Right ventricle myocardium inferior (tissue), 1 donor: ENCODE measurements at regions of chr21 and their contacts with region 1.

Region 1: DNA sequence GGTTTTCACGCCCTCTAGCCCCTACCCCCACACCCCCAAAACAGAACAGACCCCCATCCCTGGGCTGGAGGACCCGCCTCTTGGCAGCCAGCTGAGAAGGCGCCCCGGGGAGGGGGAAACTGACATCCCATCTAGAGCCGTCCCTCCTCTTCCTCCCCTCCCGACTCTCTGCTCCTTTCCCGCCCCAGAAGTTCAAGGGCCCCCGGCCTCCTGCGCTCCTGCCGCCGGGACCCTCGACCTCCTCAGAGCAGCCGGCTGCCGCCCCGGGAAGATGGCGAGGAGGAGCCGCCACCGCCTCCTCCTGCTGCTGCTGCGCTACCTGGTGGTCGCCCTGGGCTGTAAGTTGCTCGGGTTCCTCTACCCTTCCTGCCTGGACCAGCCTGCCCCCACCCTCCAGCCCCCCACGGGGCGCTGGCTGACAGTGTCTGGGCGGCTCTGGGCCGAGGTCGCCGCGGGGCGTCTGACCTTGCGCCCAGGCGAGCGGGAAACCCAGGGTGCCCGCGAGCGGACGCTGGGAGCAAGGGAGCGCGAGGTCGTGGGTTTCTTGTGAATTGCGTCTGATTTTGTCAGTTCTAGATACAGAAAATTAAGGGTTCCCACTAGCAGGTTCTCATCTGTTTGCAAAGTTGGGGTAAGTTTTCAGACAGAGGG is 618 bp downstream of the JAM2 start:
- DNase-seq: peak; percentile 73
- ATAC-seq: peak; percentile 81

Region 2: GRCh38 chr21:25607151-25608043 is 32.3 kb before region 1 on chr21 and contains the start of gene MRPL39:
- intact Hi-C with region 1: loop called (anchors 2 kb)
- DNase-seq: peak; percentile 95
- ATAC-seq: peak; percentile 98
- total RNA-seq, gene MRPL39: 59.4 TPM

Region 3: DNA sequence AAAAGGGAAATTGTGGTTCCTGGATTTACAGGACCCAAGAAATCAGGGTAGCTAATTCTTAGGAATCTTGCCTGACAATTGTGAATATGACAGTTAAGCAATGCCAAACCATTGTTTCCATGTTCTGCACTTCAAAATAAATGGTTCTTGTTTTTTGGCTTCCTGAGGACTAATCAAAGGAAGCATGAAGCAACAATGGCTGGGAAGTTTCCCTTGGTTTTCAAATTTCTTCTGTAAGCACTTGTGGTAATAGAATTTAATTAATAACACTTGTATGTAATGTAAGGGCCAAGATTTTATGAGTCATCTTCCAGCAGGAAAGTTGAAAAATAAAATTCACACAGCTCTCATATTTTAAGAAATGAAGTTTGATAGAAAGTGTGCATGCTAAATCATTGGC is 31.1 kb after region 1 on chr21:
- intact Hi-C with region 1: loop called (anchors 1 kb)
- DNase-seq: no peak
- ATAC-seq: peak; percentile 68

Region 4: DNA sequence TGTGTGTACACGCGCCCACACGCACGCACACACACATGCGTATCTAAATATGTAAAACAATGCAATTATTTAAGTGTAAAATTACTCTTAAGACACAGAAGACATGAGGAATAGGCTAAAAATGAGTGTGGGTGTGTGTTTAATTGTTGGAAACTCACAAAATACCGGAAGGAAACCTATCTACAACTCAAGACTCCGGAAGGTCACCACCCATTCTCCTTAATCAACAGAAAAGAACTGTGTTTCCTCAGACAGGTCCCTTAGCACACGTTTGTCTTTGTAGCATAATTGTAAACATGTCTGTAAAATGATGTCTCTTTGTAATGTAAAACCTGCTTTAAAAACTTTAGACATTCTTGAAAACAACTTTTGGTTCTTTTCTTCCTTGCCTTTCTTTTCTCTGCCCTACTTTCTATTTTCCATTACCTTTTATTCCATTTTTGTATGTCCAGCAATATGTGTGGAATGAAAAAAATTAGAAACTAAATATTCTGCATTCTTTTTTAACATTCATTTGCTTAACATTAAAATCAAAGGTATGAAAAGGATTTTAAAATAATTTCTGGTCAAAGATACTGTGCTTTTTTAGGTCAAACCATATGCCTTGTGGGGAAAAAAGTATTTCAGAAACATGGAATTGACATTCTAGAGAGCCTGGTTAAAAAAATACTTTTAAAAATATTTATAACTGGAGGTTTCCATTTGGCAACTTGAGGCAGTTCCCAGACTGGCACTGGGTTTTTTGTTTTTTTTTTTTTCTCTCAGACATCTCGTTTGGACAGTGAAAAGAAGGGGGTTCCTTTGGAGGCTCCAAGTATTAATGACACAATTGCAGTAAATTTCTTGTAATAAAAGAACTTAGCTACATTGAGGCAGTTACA is 48.8 kb after region 1 on chr21:
- intact Hi-C with region 1: loop called (anchors 5 kb)
- DNase-seq: no peak
- ATAC-seq: no peak

Region 5: DNA sequence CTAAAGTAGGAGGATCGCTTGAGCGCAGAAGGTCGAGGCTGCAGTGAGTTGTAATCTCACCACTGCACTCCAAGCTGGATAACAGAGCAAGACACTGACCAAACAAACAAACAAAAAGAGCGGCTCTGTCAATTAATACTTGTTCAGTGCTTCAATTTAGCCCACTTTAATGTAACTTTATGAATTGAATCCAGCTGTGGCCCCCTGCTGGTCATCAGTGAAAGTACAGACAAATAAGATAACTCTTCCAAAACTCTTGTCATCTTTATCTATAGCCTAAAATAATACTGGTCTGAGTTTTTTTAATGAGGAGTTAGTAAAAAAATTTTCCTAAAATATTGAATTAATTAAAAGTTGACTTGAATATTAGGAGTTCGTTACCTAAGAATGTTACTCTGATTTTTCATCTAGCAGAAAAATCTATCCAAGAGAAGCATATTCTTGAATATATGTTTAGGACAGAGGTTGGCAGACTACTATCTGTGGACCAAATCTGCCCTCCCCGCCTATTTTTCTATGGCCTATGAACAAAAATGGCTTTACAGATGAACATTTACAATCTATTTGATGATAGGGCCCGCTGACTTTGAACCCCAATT is 68.9 kb after region 1 on chr21:
- intact Hi-C with region 1: loop called (anchors 2 kb)
- DNase-seq: no peak
- ATAC-seq: no peak

Region 6: GRCh38 chr21:25734904-25735645 is 95.4 kb after region 1 on chr21 and contains the starts of genes ATP5PF and GABPA:
- intact Hi-C with region 1: loop called (anchors 2 kb)
- DNase-seq: peak; percentile 98
- ATAC-seq: peak; percentile 97
- total RNA-seq, gene ATP5PF: 969 TPM
- total RNA-seq, gene GABPA: 18.3 TPM

Region 7: DNA sequence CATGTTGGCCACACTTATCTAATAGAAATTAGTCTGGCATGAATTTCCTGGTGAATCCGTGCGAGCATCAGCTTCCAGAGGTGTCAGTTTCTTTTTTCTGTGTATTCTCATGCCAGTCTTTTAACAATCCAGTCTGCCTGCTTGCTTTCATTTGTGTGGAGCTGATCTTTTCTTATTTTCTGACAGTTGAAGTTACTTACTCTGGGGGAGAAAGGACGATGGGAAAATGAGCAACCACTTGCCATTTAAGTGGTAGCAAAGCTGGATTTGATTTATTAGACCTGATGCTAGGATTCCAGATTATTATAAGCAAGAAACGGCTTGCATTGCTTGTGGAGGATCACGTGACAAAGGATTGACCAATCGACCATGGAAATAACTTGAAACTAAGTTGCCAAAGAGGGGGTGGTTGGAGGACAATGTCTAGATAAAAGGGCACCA is 555.2 kb after region 1 on chr21:
- intact Hi-C with region 1: no loop called
- DNase-seq: no peak
- ATAC-seq: no peak